MCF 10A (cell line): ENCODE measurements at regions of chr19 and their contacts with region 1.

Region 1: DNA sequence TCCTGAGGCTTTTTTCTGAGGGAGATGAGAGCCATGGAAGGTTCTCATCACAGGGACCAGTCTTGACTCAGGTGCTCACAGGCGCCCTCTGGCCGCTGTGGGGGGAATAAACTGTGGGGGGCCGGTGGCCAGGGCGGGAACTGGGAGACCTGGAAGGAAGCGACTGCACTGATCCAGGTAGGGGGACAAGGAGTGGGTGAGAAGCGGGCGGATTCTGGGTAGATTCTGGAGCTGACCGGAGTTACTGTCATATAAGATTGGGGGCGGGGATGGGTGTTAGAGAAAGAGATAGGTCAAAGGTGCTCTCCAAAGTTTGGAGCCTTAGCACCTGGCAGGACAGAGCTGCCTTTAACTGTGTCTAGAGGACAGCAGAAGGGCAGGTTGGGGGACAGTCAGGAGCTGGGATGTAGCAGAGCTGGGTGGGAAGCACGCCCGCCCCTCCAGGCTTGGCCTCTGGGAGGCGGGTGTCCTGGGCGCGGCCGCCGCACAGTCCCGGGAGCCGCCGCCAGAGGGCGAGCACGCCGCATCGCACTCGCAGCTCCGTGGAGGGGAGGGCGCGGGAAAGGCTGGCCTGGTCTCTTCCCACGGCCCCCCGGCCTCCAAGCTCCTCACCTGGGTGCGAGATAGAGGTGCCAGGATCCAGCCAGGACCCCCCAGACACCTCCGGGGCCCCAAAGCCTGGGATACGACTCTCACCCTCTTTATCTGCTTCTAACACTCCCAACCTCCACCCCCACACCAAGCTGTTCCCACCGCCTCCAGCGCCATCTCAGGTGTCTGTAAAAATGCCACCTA is 4.2 kb upstream of the DAND5 start:
- DNase-seq: peak; percentile 88
- H3K4me3 Mint-ChIP-seq: peak overlapping the region; percentile 85
- H3K27ac Mint-ChIP-seq: peak overlapping the region; percentile 12
- H3K4me1 Mint-ChIP-seq: peaks cover 6% of the 10 kb centered on the region
- H3K27me3 Mint-ChIP-seq: no peaks in the 10 kb centered on the region
- CTCF ChIP-seq: peak; percentile 76

Region 2: DNA sequence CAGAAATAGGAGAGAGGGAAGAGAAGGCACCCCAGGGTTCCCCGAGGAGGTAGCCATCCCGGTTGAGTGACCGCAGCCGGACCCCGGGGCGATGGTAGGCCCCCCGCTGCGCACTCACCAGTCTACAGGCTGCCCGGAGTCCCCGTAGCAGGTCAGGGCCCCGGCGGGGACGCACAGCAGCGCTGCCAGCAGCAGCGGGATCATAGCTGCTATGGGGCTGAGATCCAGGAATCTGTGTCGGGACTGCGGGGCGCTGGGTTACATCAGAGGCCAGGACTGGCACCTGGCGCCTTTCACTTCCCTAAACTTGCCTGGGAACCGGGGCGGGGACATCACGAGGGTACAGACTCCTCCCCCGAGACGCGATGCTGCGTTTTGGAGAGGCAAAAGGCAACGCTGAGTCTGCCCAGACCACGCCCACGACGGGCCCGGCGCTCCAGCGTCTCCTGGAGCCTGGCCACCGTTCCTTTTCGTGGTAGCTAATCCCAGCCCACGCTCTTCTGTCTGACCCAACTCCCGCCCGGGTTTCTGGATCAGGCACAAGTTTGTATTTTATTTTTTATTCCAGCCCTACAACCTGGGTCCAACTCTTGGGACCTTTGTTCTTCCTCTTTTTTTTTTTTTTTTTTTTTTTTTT is 83.9 kb before region 1 on chr19 and contains the start of gene DNASE2:
- CTCF ChIA-PET with region 1: interaction called, 11 read pairs
- POLR2A ChIA-PET with region 1: interaction called, 4 read pairs
- intact Hi-C with region 1: no loop called
- DNase-seq: peak; percentile 99
- H3K4me3 Mint-ChIP-seq: peak within 1 kb of the TSS; percentile 84
- H3K27ac Mint-ChIP-seq: peak within 1 kb of the TSS; percentile 90
- H3K4me1 Mint-ChIP-seq: no peaks in the 10 kb centered on the region
- H3K27me3 Mint-ChIP-seq: no peaks in the 10 kb centered on the region
- CTCF ChIP-seq: no peak
- total RNA-seq, gene DNASE2: 26.7 and 28.7 TPM in 2 replicates

Region 3: GRCh38 chr19:12890787-12891552 is 74.2 kb before region 1 on chr19 and contains the start of gene GCDH:
- CTCF ChIA-PET with region 1: interaction called, 11 read pairs
- POLR2A ChIA-PET with region 1: interaction called, 4 read pairs
- intact Hi-C with region 1: no loop called
- DNase-seq: peak; percentile 100
- H3K4me3 Mint-ChIP-seq: peak within 1 kb of the TSS; percentile 99
- H3K27ac Mint-ChIP-seq: peak within 1 kb of the TSS; percentile 69
- H3K4me1 Mint-ChIP-seq: peaks cover 16% of the 10 kb centered on the region
- H3K27me3 Mint-ChIP-seq: no peaks in the 10 kb centered on the region
- CTCF ChIP-seq: no peak
- total RNA-seq, gene GCDH: 22.9 and 38.0 TPM in 2 replicates

Region 4: GRCh38 chr19:13002166-13002898 is 37.1 kb after region 1 on chr19:
- CTCF ChIA-PET with region 1: interaction called, 16 read pairs
- POLR2A ChIA-PET with region 1: no interaction called
- intact Hi-C with region 1: no loop called
- DNase-seq: no peak
- H3K4me3 Mint-ChIP-seq: no peak overlapping the region
- H3K27ac Mint-ChIP-seq: no peak overlapping the region
- H3K4me1 Mint-ChIP-seq: no peaks in the 10 kb centered on the region
- H3K27me3 Mint-ChIP-seq: no peaks in the 10 kb centered on the region
- CTCF ChIP-seq: no peak

Region 5: DNA sequence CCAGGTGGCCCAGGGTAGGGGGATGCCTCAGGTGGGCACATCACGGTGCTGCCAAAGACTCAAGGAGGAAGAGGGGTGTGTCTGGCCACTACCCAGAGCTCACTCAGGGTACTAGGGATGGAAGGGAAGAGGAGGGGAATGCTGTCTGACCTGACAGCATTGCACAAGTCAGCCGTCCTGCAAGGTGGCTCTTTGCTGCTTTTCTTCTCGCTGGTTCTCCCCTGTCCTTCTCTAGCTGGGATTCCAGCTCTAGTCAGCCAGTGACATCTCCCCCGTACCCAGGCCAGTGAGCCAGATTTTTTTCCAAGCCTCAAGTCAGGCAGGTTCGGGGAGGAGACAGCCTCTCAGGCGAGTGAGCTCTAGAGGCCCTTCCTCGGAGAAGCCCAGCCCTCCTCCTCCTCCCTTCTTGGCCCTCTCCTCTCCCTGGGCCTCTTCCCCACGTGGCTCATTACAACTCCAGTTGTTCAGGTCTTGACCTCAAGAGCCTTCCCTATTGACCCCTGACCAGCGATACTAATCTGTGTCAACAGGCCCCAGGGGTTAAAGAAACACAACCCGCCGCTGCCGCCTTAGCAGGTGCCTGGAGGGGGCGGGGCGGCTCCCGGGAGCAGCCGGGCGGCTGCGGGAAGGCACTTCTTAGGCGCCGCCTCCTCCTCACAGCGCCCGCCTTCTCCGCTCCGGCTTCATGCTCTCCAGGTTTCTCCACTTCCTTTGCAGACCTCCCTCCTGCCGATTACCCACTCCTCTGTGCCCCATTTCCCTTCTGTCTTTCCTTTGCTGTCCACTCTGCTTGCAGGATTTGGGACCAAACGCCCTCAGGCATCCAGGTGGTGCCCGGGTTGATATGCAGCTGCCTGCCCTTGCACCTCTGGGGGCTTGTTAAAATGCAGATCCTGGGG is 86.3 kb after region 1 on chr19:
- CTCF ChIA-PET with region 1: interaction called, 11 read pairs
- POLR2A ChIA-PET with region 1: interaction called, 3 read pairs
- intact Hi-C with region 1: no loop called
- DNase-seq: peak; percentile 63
- H3K4me3 Mint-ChIP-seq: peak overlapping the region; percentile 10
- H3K27ac Mint-ChIP-seq: no peak overlapping the region
- H3K4me1 Mint-ChIP-seq: peaks cover 48% of the 10 kb centered on the region
- H3K27me3 Mint-ChIP-seq: no peaks in the 10 kb centered on the region
- CTCF ChIP-seq: no peak

Region 6: DNA sequence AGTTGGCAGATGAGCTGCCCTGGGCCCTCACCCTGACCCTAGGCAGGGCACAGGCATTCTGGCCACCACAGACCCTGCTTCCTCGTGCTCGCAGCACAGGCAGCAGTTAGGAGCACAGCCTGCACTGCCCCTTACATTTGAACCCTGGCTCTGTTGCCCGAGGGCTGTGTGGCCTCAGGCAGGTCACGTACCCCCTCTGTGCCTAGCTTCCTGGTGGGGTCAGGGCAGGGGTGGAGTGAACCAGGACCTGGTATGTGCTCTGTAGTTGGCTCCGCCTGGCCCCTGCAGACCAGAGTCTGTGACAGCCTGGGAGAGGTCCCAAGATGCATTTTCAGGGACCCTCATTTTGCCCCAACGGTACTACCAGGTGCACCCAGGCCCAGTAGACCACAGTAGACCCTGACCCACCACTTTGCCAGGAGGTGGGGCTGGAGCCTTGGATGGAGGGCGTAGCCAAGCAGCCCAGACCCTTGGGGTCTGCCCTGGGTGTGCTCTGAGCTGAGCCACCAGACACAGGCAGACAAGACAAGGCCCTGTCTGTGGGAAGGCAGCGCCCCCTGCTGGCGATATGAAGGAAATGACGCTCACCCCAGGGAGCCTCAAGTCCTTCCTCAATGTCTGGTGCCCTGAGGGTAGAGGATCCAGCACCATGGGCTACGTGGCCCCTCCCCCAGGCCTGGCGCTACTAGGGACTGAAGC is 128.3 kb after region 1 on chr19:
- CTCF ChIA-PET with region 1: interaction called, 21 read pairs
- POLR2A ChIA-PET with region 1: no interaction called
- intact Hi-C with region 1: no loop called
- DNase-seq: peak; percentile 86
- H3K4me3 Mint-ChIP-seq: no peak overlapping the region
- H3K27ac Mint-ChIP-seq: no peak overlapping the region
- H3K4me1 Mint-ChIP-seq: peaks cover 5% of the 10 kb centered on the region
- H3K27me3 Mint-ChIP-seq: no peaks in the 10 kb centered on the region
- CTCF ChIP-seq: peak; percentile 95